Endothelial cell of umbilical vein (primary cell): ENCODE measurements at regions of chr12 and their contacts with region 1.

Region 1: DNA sequence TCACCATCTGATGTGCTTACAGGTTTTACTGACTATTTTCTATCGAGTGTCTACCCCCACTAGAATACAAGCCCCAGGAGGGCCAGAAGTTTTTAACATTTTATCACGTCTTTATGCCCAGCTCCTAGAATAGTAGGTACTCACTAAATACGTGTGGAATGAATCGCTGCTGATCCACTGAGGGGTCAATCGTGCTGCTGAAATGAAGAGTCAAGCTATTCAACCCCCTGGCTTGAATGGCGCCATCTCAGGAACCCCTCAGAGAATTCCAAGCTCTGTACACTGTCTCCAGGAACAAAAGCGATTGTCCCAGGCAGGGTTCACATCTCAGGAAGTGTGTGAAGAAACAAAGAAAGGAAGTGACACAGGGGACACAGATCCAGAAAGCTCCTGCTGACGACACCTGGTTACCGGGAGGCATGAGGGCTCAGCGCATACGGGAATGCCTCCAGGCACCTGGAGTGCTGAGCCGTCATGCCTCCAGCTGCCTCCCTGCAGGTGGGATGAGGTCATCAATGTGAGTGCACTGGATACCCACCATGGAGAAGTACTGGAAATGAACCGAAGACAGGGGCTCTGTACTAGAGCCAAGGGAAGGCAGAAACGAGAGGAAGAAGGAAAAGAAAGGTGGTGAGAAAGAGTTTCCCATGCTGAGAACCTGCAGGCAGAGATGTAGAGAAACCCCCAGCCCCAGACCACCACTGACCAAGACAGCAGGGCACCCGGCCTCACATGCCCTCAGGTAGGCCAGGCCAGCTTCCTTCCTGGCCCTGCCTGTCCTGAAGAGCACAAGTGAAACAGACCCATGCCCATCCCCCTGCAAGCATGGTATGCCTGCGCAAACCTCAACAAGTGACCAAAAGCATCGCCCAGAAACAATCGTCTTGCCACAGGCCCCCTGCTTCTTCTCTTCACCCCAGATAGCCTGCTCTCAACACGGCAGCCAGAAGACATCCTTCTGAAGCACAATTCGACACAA is 45.4 kb downstream of the PITPNM2 start:
- DNase-seq: peak; percentile 70
- H3K4me3 ChIP-seq: no peak overlapping the region
- H3K27ac ChIP-seq: peak overlapping the region; percentile 84
- H3K4me1 ChIP-seq: peaks cover 29% of the 10 kb centered on the region
- H3K27me3 ChIP-seq: no peaks in the 10 kb centered on the region
- CTCF ChIP-seq: no peak
- POLR2A ChIP-seq: no peak

Region 2: GRCh38 chr12:123024819-123025391 is 80.6 kb before region 1 on chr12:
- CTCF ChIA-PET with region 1: no interaction called
- POLR2A ChIA-PET with region 1: no interaction called
- dilution Hi-C with region 1: no loop called
- intact Hi-C with region 1: no loop called
- DNase-seq: no peak
- H3K4me3 ChIP-seq: no peak overlapping the region
- H3K27ac ChIP-seq: no peak overlapping the region
- H3K4me1 ChIP-seq: peaks cover 3% of the 10 kb centered on the region
- H3K27me3 ChIP-seq: no peaks in the 10 kb centered on the region
- CTCF ChIP-seq: no peak
- POLR2A ChIP-seq: no peak

Region 3: DNA sequence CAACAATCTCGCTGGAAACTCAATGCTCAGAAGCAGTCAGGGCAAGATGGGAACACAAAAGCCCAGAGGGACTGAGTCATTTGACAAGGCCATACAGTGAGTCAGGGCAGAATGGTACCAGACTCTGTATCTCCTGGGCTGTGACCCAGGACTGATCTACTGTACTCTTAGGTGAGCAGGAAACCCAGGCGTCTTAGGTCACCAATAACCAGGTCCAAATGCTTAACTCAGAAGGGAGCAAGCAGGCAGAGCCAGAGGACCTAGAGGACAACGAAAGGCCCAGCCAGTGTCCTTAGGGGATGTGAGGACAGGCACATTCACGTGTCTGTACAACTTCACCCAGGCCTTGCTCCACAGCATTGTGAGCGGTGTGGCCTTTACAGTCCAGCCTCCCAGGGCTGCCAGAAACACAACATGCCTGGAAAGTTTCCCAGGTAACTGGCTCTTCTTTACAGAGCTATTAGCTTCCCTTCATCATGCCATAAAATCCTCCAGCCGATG is 55.1 kb before region 1 on chr12:
- CTCF ChIA-PET with region 1: no interaction called
- POLR2A ChIA-PET with region 1: no interaction called
- dilution Hi-C with region 1: no loop called
- intact Hi-C with region 1: no loop called
- DNase-seq: no peak
- H3K4me3 ChIP-seq: no peak overlapping the region
- H3K27ac ChIP-seq: no peak overlapping the region
- H3K4me1 ChIP-seq: no peaks in the 10 kb centered on the region
- H3K27me3 ChIP-seq: no peaks in the 10 kb centered on the region
- CTCF ChIP-seq: no peak
- POLR2A ChIP-seq: no peak

Region 4: DNA sequence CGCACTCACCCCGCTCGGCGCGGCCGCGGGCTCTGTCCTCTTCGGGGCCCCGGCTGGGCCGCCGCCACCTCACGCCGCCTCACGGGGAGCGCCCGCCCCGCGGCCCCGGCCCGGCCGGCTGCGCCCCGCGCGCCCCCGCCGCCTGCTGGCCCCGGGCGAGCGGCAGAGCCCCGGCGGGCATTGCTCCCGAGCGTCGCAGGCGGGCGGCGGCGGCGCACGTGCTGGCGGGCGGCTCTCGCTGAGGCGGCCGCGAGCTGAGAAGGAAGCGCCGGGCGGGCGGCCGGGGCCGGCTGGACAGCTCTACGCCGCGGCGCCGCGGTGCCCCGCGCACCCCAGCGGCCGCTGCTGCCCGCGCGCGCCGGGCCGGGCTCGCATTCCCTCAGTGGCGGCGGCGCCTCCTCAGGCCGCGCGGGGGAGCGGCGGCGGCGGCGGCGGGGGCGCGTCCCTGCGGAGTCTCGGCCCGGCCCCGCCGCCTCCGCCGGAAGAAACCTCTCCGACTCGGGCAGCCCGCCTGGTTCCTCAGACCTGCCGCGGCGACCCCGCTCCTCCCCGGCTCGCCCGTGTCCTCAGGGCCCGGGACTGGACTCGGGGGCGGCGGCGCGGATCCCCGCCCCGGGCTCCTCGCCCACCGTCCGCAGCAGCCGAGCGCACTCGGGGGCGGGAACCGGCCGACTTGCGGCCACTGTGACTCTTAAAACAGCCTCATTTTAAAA is 45.4 kb after region 1 on chr12 and contains the start of gene PITPNM2:
- CTCF ChIA-PET with region 1: interaction called, 6 read pairs
- POLR2A ChIA-PET with region 1: no interaction called
- dilution Hi-C with region 1: no loop called
- intact Hi-C with region 1: loop called (anchors 2 kb)
- DNase-seq: peak; percentile 41
- H3K4me3 ChIP-seq: peak within 1 kb of the TSS; percentile 61 to 72 (median 66)
- H3K27ac ChIP-seq: no peak within 1 kb of the TSS
- H3K4me1 ChIP-seq: peaks cover 14% of the 10 kb centered on the region
- H3K27me3 ChIP-seq: no peaks in the 10 kb centered on the region
- CTCF ChIP-seq: no peak
- POLR2A ChIP-seq: no peak
- total RNA-seq, gene PITPNM2: 15.9 and 21.4 TPM in 2 replicates